ENCODE measurements at regions of chr3 and their contacts with region 1.

Region 1: GRCh38 chr3:187104933-187105332 is 34.4 kb downstream of the RPL39L start:
- DNase-seq: no peak
- H3K4me3 ChIP-seq: no peak overlapping the region
- H3K27ac ChIP-seq: no peak overlapping the region
- H3K4me1 ChIP-seq: peaks cover 1% of the 10 kb centered on the region
- H3K27me3 ChIP-seq: no peaks in the 10 kb centered on the region
- CTCF ChIP-seq: no peak
- EP300 ChIP-seq: no peak
- POLR2A ChIP-seq: no peak

Region 2: DNA sequence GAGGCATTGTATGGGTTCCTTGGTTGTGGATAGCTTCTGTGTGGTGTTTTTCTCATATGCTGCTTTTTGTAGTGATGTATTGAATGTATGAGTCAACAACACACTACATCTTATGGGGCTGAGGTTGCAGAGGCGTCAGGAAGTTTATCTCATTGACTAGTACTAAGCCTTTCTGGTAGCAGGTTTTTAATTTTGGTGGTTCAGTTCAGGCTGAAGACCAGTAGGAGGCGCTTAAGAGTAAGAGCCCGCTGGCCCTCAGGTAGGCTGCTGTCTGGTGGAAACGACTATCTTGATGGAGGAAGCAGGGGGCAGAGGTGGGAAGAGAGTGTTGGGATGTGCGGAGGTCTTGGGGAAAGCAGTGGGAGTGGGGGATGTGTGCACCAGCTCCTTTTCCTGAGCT is 325.6 kb after region 1 on chr3:
- intact Hi-C with region 1: loop called in 1 of 4 experiments (anchors 5 kb)
- DNase-seq: no peak
- H3K4me3 ChIP-seq: no peak overlapping the region
- H3K27ac ChIP-seq: no peak overlapping the region
- H3K4me1 ChIP-seq: no peaks in the 10 kb centered on the region
- H3K27me3 ChIP-seq: no peaks in the 10 kb centered on the region
- CTCF ChIP-seq: no peak
- EP300 ChIP-seq: no peak
- POLR2A ChIP-seq: no peak

Measured in ovary (tissue), 10 donors.